Activated T-helper 1 cell treated with anti-CD3 and anti-CD28 coated beads, Interleukin-12 subunit alpha, Interleukin-12 subunit beta, Interleukin-2, Interleukin-4 antibody, amounts not matched to agents 30 ng/mL and 10 ng/mL and 1 ng/mL, durations not matched to agents 14 hours and 24 hours and 36 hours (primary cell): ENCODE measurements at regions of chr9 and their contacts with region 1.

Region 1: GRCh38 chr9:92669890-92670708 is at the start of gene IPPK:
- DNase-seq: peak; percentile 98
- H3K4me3 Mint-ChIP-seq: peak within 1 kb of the TSS; percentile 88
- H3K27ac Mint-ChIP-seq: peak within 1 kb of the TSS; percentile 88
- H3K4me1 Mint-ChIP-seq: peaks cover 38% of the 10 kb centered on the region
- H3K27me3 Mint-ChIP-seq: no peaks in the 10 kb centered on the region
- total RNA-seq, gene IPPK: 14.8 and 14.9 TPM in 2 replicates

Region 2: DNA sequence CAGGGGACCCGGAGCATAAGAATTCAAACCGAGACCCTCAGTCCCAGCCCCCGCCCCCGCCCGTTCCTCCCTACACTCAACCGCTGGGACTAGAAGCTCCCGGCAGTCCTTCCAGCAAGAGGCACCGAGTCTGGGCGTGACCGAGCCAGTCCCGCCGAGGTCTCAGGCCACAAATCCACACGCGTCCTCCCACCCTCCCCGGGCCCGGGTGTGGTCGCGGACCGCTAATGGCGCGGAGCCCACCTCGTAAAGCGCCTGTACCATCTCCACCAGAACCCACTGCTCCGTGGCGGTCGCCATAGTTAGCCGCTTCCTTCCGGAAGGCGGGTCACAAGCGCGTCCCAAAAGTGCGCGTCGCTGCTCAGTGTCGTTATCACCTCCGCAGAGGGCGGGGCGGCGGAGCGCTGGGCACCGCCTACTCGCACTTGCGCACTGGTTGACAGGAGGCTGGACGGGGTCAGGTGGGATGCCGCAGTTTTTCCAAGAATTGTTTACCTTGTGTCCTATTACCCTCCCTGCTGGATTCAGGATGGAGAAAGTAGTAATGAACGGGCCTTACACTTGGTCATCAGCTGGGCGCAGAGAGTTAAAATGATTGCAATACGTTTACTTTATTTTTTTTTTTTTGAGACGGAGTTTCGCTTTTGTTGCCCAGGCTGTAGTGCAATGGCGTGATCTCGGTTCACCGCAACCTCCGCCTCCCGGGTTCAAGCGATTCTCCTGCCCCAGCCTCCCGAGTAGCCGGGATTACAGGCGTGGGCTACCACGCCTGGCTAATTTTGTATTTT is 554.8 kb before region 1 on chr9 and contains the start of gene SPTLC1:
- intact Hi-C with region 1: loop called (anchors 1 kb)
- DNase-seq: peak; percentile 93
- H3K4me3 Mint-ChIP-seq: peak within 1 kb of the TSS; percentile 97
- H3K27ac Mint-ChIP-seq: peak within 1 kb of the TSS; percentile 95
- H3K4me1 Mint-ChIP-seq: peaks cover 47% of the 10 kb centered on the region
- H3K27me3 Mint-ChIP-seq: no peaks in the 10 kb centered on the region
- total RNA-seq, gene SPTLC1: 60.2 and 62.3 TPM in 2 replicates

Region 3: GRCh38 chr9:92325269-92325990 is 344.7 kb before region 1 on chr9 and contains the starts of genes CENPP and NOL8:
- intact Hi-C with region 1: loop called (anchors 1 kb)
- DNase-seq: peak; percentile 81
- H3K4me3 Mint-ChIP-seq: peak within 1 kb of the TSS; percentile 93
- H3K27ac Mint-ChIP-seq: peak within 1 kb of the TSS; percentile 96
- H3K4me1 Mint-ChIP-seq: peaks cover 32% of the 10 kb centered on the region
- H3K27me3 Mint-ChIP-seq: no peaks in the 10 kb centered on the region
- total RNA-seq, gene CENPP: 24.6 and 26.0 TPM in 2 replicates
- total RNA-seq, gene NOL8: 84.4 and 95.5 TPM in 2 replicates

Region 4: DNA sequence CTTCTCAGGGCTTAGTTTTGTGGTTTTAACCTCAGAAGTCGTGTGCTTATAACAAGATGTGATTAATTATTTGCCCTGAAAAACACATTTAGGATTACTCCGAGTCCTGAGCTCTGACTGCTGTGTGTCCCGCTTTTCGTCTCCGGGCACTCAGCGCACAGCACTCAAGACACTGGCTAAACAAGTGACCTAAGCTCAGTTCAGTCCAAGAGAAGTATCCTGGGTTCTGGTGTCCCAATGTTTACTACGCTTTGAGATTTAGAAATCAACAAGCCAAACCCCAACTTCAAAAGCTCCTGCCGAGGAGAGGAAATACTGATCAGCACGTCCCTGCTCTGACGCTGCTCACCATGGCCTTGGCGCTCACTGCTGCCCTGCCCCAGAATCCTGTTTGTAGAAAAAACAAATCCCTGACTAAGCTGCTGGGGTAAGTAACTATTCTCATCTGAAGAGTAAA is 53.4 kb before region 1 on chr9:
- intact Hi-C with region 1: no loop called
- DNase-seq: no peak
- H3K4me3 Mint-ChIP-seq: no peak overlapping the region
- H3K27ac Mint-ChIP-seq: no peak overlapping the region
- H3K4me1 Mint-ChIP-seq: no peaks in the 10 kb centered on the region
- H3K27me3 Mint-ChIP-seq: no peaks in the 10 kb centered on the region

Region 5: GRCh38 chr9:92647671-92648473 is 22.2 kb before region 1 on chr9:
- intact Hi-C with region 1: loop called (anchors 2 kb)
- DNase-seq: no peak
- H3K4me3 Mint-ChIP-seq: no peak overlapping the region
- H3K27ac Mint-ChIP-seq: peak overlapping the region; percentile 47
- H3K4me1 Mint-ChIP-seq: peaks cover 16% of the 10 kb centered on the region
- H3K27me3 Mint-ChIP-seq: no peaks in the 10 kb centered on the region

Region 6: GRCh38 chr9:92877531-92878430 is 207.7 kb after region 1 on chr9 and contains the start of gene ZNF484:
- intact Hi-C with region 1: loop called (anchors 1 kb)
- DNase-seq: peak; percentile 92
- H3K4me3 Mint-ChIP-seq: peak within 1 kb of the TSS; percentile 92
- H3K27ac Mint-ChIP-seq: peak within 1 kb of the TSS; percentile 97
- H3K4me1 Mint-ChIP-seq: peaks cover 46% of the 10 kb centered on the region
- H3K27me3 Mint-ChIP-seq: peaks cover 4% of the 10 kb centered on the region
- total RNA-seq, gene ZNF484: 7.2 and 8.1 TPM in 2 replicates

Region 7: GRCh38 chr9:93566408-93567270 is 896.5 kb after region 1 on chr9:
- intact Hi-C with region 1: loop called (anchors 1 kb)
- DNase-seq: peak; percentile 99
- H3K4me3 Mint-ChIP-seq: peak overlapping the region; percentile 85
- H3K27ac Mint-ChIP-seq: peak overlapping the region; percentile 87
- H3K4me1 Mint-ChIP-seq: peaks cover 22% of the 10 kb centered on the region
- H3K27me3 Mint-ChIP-seq: no peaks in the 10 kb centered on the region